ENCODE measurements at regions of chr6 and their contacts with region 1.

Region 1: DNA sequence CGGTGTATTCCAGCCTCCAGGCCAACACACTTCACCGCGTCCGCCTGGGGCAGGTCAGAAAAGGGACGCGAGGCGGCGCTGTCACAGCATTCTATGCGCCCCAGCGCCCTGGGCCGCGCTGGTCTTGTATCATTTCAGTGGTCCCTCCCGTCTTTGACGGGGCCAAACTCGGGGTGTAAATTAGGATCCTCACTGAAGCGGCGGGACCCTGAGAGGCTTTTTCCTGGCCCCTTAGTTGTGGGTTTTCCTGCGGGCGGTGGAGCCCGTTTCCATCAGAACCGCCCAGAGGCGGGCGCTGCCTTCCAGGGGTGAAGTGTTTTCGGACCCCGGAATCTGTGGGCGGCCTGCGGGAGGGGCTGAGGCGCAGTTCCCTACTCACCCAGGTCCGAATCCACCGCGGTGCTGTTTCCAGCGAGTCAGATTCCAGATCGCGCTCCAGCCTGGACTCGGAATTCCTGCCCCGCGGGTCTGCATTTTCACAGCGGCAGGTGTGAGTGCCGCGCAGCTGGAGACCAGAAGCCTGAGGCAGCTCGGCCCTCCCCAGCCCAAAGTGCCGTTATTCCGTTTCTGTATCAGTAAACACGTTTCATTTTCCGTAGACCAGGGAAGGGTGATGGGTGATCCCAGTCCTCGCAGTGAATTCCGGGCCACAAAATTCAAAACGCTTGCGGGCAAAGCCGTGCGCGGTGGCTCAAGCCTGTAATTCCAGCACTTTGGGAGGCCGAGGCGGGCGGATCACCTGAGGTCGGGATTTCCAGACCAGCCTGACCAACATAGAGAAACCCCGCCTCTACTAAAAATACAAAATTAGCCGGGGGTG is 3.9 kb upstream of the MICB start:
- DNase-seq: peak; percentile 15 to 90 (median 68)
- ATAC-seq: peak; percentile 43 to 54 (median 52)
- H3K4me3 ChIP-seq: peak overlapping the region; percentile 66 to 94
- H3K4me3 Mint-ChIP-seq: peak overlapping the region; percentile 77 to 93 (median 83)
- H3K27ac ChIP-seq: peak overlapping the region; percentile 74
- H3K27ac Mint-ChIP-seq: peak overlapping the region; percentile 76 to 89
- H3K4me1 ChIP-seq: peaks cover 13 to 67% of the 10 kb centered on the region in 2 experiments
- H3K4me1 Mint-ChIP-seq: peaks cover 54 to 60% (median 55%) of the 10 kb centered on the region in 3 donors
- H3K27me3 ChIP-seq: no peaks in the 10 kb centered on the region
- H3K27me3 Mint-ChIP-seq: no peaks in the 10 kb centered on the region

Region 2: DNA sequence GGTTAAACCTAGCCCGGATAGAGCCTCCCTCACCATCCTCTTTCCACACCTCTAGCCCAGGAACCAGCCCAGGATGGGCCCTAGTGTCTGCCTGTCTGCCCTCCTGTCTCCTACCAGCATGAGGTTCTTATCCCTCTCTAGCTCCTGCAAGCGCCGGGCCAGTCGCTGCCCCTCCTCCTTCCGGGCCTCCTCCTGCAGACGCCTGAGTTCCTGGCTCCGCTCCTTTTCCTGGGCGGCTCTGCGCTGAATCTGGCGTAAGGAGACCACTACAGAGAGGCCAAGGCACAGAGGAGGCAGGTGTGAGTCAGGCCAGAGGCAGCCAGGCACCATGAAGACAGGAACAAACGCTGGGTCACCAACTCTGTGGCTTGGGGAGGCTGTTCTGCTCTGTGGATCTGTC is 350.9 kb before region 1 on chr6:
- CTCF ChIA-PET with region 1: no interaction called
- POLR2A ChIA-PET with region 1: no interaction called
- DNase-seq: no peak
- ATAC-seq: no peak
- H3K4me3 ChIP-seq: no peak overlapping the region
- H3K4me3 Mint-ChIP-seq: no peak overlapping the region
- H3K27ac ChIP-seq: no peak overlapping the region
- H3K27ac Mint-ChIP-seq: no peak overlapping the region
- H3K4me1 ChIP-seq: no peaks in the 10 kb centered on the region
- H3K4me1 Mint-ChIP-seq: peaks cover 0 to 5% (median 0%) of the 10 kb centered on the region in 3 donors
- H3K27me3 ChIP-seq: no peaks in the 10 kb centered on the region
- H3K27me3 Mint-ChIP-seq: no peaks in the 10 kb centered on the region

Region 3: GRCh38 chr6:31541658-31542521 is 47.8 kb after region 1 on chr6 and contains the start of gene DDX39B:
- CTCF ChIA-PET with region 1: interaction called, 4 to 30 read pairs
- POLR2A ChIA-PET with region 1: interaction called, 4 to 8 read pairs
- DNase-seq: peak; percentile 84 to 97 (median 93)
- ATAC-seq: peak; percentile 80 to 81 (median 80)
- H3K4me3 ChIP-seq: peak within 1 kb of the TSS; percentile 87 to 99
- H3K4me3 Mint-ChIP-seq: peak within 1 kb of the TSS; percentile 96 to 99 (median 97)
- H3K27ac ChIP-seq: peak within 1 kb of the TSS; percentile 99
- H3K27ac Mint-ChIP-seq: peak within 1 kb of the TSS; percentile 99
- H3K4me1 ChIP-seq: peaks cover 28 to 46% of the 10 kb centered on the region in 2 experiments
- H3K4me1 Mint-ChIP-seq: peaks cover 53 to 68% (median 54%) of the 10 kb centered on the region in 3 donors
- H3K27me3 ChIP-seq: no peaks in the 10 kb centered on the region
- H3K27me3 Mint-ChIP-seq: no peaks in the 10 kb centered on the region
- total RNA-seq, gene DDX39B: 507 to 669 (median 631) TPM